PC-3 (cell line): ENCODE measurements at regions of chr1 and their contacts with region 1.

Region 1: GRCh38 chr1:164611754-164612642 is 53.0 kb downstream of the PBX1 start:
- DNase-seq: peak; percentile 93
- ATAC-seq: peak; percentile 94
- H3K4me3 ChIP-seq: peak overlapping the region; percentile 8; the same call in 1 of the 2 replicates
- H3K27ac ChIP-seq: peak overlapping the region; percentile 51
- H3K4me1 ChIP-seq: peaks cover 25% of the 10 kb centered on the region
- H3K27me3 ChIP-seq: no peaks in the 10 kb centered on the region
- CTCF ChIP-seq: no peak

Region 2: GRCh38 chr1:164660412-164660772 is 48.4 kb after region 1 on chr1:
- CTCF ChIA-PET with region 1: no interaction called
- POLR2A ChIA-PET with region 1: no interaction called
- intact Hi-C with region 1: loop called (anchors 5 kb)
- DNase-seq: peak; percentile 70
- ATAC-seq: peak; percentile 70
- H3K4me3 ChIP-seq: peak overlapping the region; percentile 38; the same call in 1 of the 2 replicates
- H3K27ac ChIP-seq: peak overlapping the region; percentile 40
- H3K4me1 ChIP-seq: peaks cover 32% of the 10 kb centered on the region
- H3K27me3 ChIP-seq: no peaks in the 10 kb centered on the region
- CTCF ChIP-seq: no peak

Region 3: GRCh38 chr1:164823486-164824279 is 211.7 kb after region 1 on chr1:
- CTCF ChIA-PET with region 1: no interaction called
- POLR2A ChIA-PET with region 1: no interaction called
- intact Hi-C with region 1: no loop called
- DNase-seq: no peak
- ATAC-seq: no peak
- H3K4me3 ChIP-seq: no peak overlapping the region
- H3K27ac ChIP-seq: no peak overlapping the region
- H3K4me1 ChIP-seq: no peaks in the 10 kb centered on the region
- H3K27me3 ChIP-seq: no peaks in the 10 kb centered on the region
- CTCF ChIP-seq: no peak